Activated naive CD4-positive, alpha-beta T cell treated with anti-CD3 and anti-CD28 coated beads, Interleukin-2, amount 10 ng/mL, durations not matched to agents 7 days and 5 days (primary cell): ENCODE measurements at regions of chr17 and their contacts with region 1.

Region 1: GRCh38 chr17:76397687-76398487 is 13.5 kb downstream of the SPHK1 start:
- DNase-seq: peak; percentile 91
- H3K4me3 Mint-ChIP-seq: no peak overlapping the region
- H3K27ac Mint-ChIP-seq: peak overlapping the region; percentile 7
- H3K4me1 Mint-ChIP-seq: no peaks in the 10 kb centered on the region
- H3K27me3 Mint-ChIP-seq: no peaks in the 10 kb centered on the region

Region 2: DNA sequence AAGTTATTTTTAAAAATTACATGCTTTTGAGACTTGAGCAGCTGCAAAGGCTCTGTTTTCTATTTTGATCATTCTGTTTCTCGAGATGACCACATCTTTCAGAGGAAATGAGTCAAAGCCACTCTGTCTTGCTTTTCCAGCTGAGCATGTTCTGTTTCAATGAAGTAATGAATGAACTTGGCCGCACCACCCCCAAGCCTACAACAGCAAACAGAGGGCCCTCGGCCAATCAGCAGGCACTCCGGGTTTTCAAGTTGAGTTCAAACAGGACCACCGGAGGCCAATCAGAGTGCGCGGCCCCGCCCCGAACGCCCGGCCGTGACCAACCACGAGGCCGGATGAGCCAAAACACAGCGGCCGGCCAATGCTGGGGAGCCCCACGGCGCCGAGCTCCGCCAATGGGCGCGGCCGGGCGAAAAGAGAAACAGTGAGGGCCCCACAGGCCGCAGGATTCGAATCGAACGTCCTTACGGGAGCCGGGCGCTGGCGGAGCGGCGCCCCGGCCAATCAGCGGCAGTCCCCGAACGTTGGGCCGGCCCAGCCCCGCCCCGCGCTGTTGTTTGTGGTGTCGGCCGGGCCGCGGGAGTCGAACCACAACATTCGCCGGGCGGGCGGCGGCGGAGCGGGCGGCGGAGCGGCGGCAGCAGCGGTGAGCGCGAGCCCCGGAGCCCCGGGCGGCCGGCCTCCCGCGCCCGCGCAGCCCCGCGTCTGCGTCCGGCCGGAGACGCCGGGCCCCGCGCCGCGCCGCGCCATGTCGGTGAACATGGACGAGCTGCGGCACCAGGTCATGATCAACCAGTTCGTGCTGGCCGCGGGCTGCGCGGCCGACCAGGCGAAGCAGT is 132.9 kb before region 1 on chr17 and contains the start of gene UBALD2:
- CTCF ChIA-PET with region 1: no interaction called
- DNase-seq: peak; percentile 99
- H3K4me3 Mint-ChIP-seq: peak within 1 kb of the TSS; percentile 96
- H3K27ac Mint-ChIP-seq: peak within 1 kb of the TSS; percentile 99
- H3K4me1 Mint-ChIP-seq: peaks cover 60% of the 10 kb centered on the region
- H3K27me3 Mint-ChIP-seq: peaks cover 5% of the 10 kb centered on the region

Region 3: GRCh38 chr17:76307299-76307965 is 90.5 kb before region 1 on chr17:
- CTCF ChIA-PET with region 1: interaction called, 133 read pairs
- DNase-seq: no peak
- H3K4me3 Mint-ChIP-seq: no peak overlapping the region
- H3K27ac Mint-ChIP-seq: no peak overlapping the region
- H3K4me1 Mint-ChIP-seq: peaks cover 2% of the 10 kb centered on the region
- H3K27me3 Mint-ChIP-seq: no peaks in the 10 kb centered on the region

Region 4: GRCh38 chr17:76384222-76384986 is 13.5 kb before region 1 on chr17 and contains the start of gene SPHK1:
- CTCF ChIA-PET with region 1: interaction called, 51 read pairs
- DNase-seq: peak; percentile 77
- H3K4me3 Mint-ChIP-seq: peak within 1 kb of the TSS; percentile 87
- H3K27ac Mint-ChIP-seq: peak within 1 kb of the TSS; percentile 86
- H3K4me1 Mint-ChIP-seq: peaks cover 19% of the 10 kb centered on the region
- H3K27me3 Mint-ChIP-seq: peaks cover 66% of the 10 kb centered on the region

Region 5: GRCh38 chr17:76414334-76415295 is 16.7 kb after region 1 on chr17:
- CTCF ChIA-PET with region 1: interaction called, 22 read pairs
- DNase-seq: no peak
- H3K4me3 Mint-ChIP-seq: no peak overlapping the region
- H3K27ac Mint-ChIP-seq: no peak overlapping the region
- H3K4me1 Mint-ChIP-seq: peaks cover 7% of the 10 kb centered on the region
- H3K27me3 Mint-ChIP-seq: no peaks in the 10 kb centered on the region

Region 6: GRCh38 chr17:76643553-76644148 is 245.8 kb after region 1 on chr17 and contains the start of gene ST6GALNAC1:
- CTCF ChIA-PET with region 1: no interaction called
- DNase-seq: peak; percentile 68
- H3K4me3 Mint-ChIP-seq: peak within 1 kb of the TSS; percentile 66
- H3K27ac Mint-ChIP-seq: peak within 1 kb of the TSS; percentile 83
- H3K4me1 Mint-ChIP-seq: peaks cover 39% of the 10 kb centered on the region
- H3K27me3 Mint-ChIP-seq: peaks cover 20% of the 10 kb centered on the region